Right ventricle myocardium inferior (tissue), 1 donor: ENCODE measurements at regions of chrX and their contacts with region 1.

Region 1: DNA sequence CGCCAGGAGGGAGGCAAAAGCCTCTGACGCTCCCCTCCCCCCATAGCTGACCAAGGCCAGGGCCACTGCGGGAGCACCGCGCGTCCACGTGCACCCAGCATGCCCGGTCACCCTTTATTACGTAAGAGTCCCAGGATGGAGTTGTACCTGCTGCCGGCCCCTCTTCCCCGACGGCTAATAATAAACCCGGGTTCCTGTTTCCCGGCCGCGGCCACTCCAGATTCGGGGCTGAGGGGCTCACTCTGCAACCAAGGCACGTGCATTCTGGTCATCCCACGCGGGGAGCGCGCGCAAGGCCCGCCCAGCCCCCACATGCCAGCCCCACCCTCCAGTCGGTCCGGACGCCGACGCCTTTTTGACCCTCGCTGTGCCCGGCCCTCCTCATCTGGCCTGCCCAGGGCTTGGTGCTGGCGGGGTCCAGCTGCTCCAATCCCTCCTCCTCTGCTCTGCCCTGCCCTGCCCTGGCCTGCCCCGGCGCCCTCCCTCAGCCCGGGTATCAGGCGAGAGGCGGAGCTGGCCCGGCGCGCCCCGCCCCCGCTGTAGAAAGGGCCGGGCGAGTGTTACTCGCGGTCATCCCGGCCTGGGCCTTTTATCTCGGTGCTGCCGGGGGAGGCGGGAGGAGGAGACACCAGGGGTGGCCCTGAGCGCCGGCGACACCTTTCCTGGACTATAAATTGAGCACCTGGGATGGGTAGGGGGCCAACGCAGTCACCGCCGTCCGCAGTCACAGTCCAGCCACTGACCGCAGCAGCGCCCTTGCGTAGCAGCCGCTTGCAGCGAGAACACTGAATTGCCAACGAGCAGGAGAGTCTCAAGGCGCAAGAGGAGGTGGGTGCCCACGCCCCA is 2.5 kb downstream of the MID1IP1 start:
- DNase-seq: peak; percentile 92
- ATAC-seq: peak; percentile 86

Region 2: DNA sequence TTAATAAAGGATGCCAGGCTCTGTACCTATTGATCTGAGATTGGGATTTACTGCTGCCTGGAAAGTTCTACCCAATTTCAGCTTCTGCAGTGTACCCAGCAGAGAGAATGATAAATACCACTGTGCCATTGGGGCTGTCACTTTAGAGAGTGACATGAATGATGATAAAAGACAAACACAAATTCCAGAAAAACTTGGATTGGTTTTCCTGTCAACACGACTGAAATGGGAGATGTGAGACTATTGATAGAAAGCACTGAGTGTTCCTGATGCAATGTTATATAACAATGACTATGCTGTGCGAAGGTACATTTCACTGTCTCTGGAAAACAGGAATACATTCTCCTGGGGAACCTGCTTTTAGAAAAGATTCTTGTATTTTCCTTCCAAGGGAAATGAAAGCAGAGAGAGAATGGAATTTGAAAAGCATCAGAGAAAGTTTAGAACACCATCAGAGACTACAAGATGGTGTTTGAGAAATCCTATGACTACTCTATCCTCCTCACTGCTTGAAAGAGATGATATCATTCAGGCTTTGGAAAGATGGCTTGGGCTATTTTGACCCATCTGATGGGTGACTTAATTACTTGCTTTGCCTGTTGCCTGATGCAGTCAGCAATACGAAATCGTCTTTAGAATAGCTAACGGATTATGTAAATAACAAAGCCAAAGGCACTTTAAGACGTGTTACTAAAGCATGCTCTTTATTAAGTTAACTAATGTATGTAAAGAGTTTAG is 47.2 kb after region 1 on chrX:
- intact Hi-C with region 1: loop called (anchors 2 kb)
- DNase-seq: no peak
- ATAC-seq: peak; percentile 71

Region 3: DNA sequence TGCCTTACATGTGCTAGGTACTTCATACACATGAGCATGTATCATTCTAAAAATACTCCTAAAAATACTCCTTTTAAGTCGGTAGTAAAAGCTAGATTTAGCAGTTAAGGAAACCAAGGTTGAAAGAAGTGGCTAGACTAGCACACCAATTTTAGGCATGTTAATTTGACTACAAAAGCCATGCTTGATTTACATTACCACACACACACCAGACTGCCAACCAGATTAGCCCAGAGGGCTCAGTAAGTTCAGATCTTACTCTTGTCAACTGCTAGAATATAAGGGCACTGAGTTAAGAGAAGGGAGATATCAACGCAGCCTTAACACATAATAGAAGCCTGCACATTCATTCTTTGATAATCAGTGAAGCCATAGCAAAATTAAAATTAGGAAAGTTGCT is 115.4 kb after region 1 on chrX:
- intact Hi-C with region 1: loop called (anchors 5 kb)
- DNase-seq: no peak
- ATAC-seq: no peak

Region 4: GRCh38 chrX:38973317-38973716 is 169.5 kb after region 1 on chrX:
- intact Hi-C with region 1: loop called (anchors 5 kb)
- DNase-seq: no peak
- ATAC-seq: no peak

Region 5: GRCh38 chrX:38985375-38985774 is 181.6 kb after region 1 on chrX:
- intact Hi-C with region 1: loop called (anchors 5 kb)
- DNase-seq: no peak
- ATAC-seq: no peak

Region 6: DNA sequence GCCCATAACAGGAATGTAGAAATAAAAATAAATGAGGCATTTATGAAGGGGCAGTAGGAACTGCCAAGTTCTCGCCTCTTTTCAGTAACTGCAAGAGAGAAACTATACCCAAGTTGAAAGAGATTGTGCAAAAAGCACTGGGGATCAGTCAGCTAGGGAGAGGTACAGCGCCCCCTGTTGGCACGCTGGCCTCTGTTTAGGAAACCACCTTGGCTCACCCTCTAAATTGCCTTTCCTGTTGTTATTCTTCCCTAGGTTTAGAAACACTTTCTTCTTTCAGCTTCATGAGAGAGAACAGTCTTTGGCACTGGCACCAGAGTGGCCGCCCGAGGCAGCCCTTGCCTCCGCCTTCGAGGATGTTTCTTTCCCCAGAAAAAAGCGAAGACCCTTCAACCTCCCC is 346.0 kb after region 1 on chrX:
- intact Hi-C with region 1: loop called (anchors 5 kb)
- DNase-seq: peak; percentile 90
- ATAC-seq: peak; percentile 76